MCF 10A (cell line): ENCODE measurements at regions of chr10 and their contacts with region 1.

Region 1: DNA sequence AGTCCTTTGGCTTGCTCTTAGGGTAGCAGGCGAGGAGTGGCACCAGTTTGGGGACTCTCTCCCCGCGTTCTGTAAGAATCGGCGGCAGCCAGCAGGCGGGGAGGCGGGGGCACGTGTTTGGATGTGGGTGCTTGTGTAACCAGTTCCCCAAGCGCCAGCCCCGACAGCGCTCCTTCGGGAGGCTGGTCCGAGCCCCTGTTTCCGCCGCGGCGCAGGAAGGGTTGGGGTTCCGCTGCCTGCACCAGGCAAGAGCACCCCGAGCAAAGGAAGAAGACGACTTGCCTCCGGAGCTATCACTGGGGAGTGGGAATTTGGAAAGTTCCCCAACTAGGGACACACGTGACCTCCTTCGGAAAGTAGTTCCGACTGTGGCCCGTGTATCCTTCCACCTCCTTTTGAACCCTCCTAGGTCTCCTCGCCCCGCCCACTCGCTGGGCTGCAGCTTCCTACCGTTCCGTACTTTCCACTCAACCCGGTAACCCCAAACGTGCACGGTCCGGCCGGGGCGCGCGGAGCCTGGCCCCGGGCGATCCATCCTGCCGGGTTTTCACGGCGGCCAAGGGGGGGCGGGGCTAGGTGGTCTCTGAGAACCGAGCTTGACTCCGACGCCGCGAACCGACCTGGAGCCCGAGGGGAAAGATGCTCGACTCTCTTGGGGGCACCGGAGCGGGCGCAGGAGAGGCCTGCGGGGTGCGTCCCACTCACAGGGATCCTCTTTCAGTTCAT is 1.2 kb downstream of the KLLN start:
- DNase-seq: peak; percentile 98
- H3K4me3 Mint-ChIP-seq: peak overlapping the region; percentile 87
- H3K27ac Mint-ChIP-seq: peak overlapping the region; percentile 83
- H3K4me1 Mint-ChIP-seq: peaks cover 16% of the 10 kb centered on the region
- H3K27me3 Mint-ChIP-seq: no peaks in the 10 kb centered on the region
- CTCF ChIP-seq: no peak

Region 2: GRCh38 chr10:87878664-87879459 is 16.7 kb after region 1 on chr10:
- CTCF ChIA-PET with region 1: interaction called, 9 read pairs
- POLR2A ChIA-PET with region 1: interaction called, 185 read pairs
- intact Hi-C with region 1: no loop called
- DNase-seq: no peak
- H3K4me3 Mint-ChIP-seq: no peak overlapping the region
- H3K27ac Mint-ChIP-seq: no peak overlapping the region
- H3K4me1 Mint-ChIP-seq: peaks cover 10% of the 10 kb centered on the region
- H3K27me3 Mint-ChIP-seq: no peaks in the 10 kb centered on the region
- CTCF ChIP-seq: no peak

Region 3: DNA sequence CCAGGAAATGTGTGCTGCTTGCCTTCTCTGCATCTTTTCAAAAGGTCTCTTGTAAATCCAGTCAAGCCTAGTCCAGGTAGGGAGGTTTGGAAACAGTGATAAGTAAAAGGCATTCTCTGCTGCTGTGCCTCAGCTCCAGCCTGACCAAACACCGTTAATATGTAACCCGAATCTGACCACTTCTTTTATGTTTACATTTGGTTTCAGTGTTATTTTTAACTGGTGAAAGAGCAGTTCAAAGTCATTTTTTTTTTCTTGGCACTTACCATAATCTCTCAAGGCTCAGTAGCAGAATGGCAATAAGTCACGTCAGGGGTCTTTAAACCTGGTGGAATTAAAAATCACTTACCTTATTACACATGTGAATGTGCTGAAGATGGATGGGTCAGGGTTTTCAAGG is 218.1 kb after region 1 on chr10:
- CTCF ChIA-PET with region 1: no interaction called
- POLR2A ChIA-PET with region 1: interaction called, 14 read pairs
- intact Hi-C with region 1: no loop called
- DNase-seq: peak; percentile 28
- H3K4me3 Mint-ChIP-seq: no peak overlapping the region
- H3K27ac Mint-ChIP-seq: peak overlapping the region; percentile 51
- H3K4me1 Mint-ChIP-seq: peaks cover 28% of the 10 kb centered on the region
- H3K27me3 Mint-ChIP-seq: no peaks in the 10 kb centered on the region
- CTCF ChIP-seq: no peak

Region 4: GRCh38 chr10:88152720-88153119 is 290.6 kb after region 1 on chr10:
- CTCF ChIA-PET with region 1: no interaction called
- POLR2A ChIA-PET with region 1: interaction called, 34 read pairs
- intact Hi-C with region 1: loop called (anchors 5 kb)
- DNase-seq: peak; percentile 95
- H3K4me3 Mint-ChIP-seq: no peak overlapping the region
- H3K27ac Mint-ChIP-seq: peak overlapping the region; percentile 91
- H3K4me1 Mint-ChIP-seq: peaks cover 35% of the 10 kb centered on the region
- H3K27me3 Mint-ChIP-seq: no peaks in the 10 kb centered on the region
- CTCF ChIP-seq: no peak

Region 5: GRCh38 chr10:88386821-88387773 is 525.0 kb after region 1 on chr10:
- CTCF ChIA-PET with region 1: interaction called, 56 read pairs
- POLR2A ChIA-PET with region 1: interaction called, 192 read pairs
- intact Hi-C with region 1: loop called (anchors 1 kb)
- DNase-seq: peak; percentile 30
- H3K4me3 Mint-ChIP-seq: no peak overlapping the region
- H3K27ac Mint-ChIP-seq: no peak overlapping the region
- H3K4me1 Mint-ChIP-seq: peaks cover 7% of the 10 kb centered on the region
- H3K27me3 Mint-ChIP-seq: no peaks in the 10 kb centered on the region
- CTCF ChIP-seq: no peak